Dorsolateral prefrontal cortex (tissue), 120 donors: ENCODE measurements at regions of chr20 and their contacts with region 1.

Region 1: GRCh38 chr20:57329608-57330221 is at the start of gene SPO11:
- DNase-seq: no peak
- H3K4me3 ChIP-seq: peak within 1 kb of the TSS in 1 of 59 donors; percentile 40
- H3K27ac ChIP-seq: peak within 1 kb of the TSS in 3 of 59 donors; percentile 3 to 40 (median 35)
- H3K27me3 ChIP-seq: peaks cover 0 to 40% (median 8%) of the 10 kb centered on the region in 45 donors
- CTCF ChIP-seq: peak in 44 of 56 donors; percentile 10 to 64 (median 32)
- total RNA-seq, gene SPO11: not detected

Region 2: GRCh38 chr20:57259121-57259937 is 70.4 kb before region 1 on chr20:
- intact Hi-C with region 1: loop called (anchors 2 to 10 kb)
- DNase-seq: peak in 2 of 10 donors; percentile 28 to 64
- H3K4me3 ChIP-seq: peak overlapping the region in 46 of 59 donors; percentile 0 to 57 (median 26)
- H3K27ac ChIP-seq: peak overlapping the region in 27 of 59 donors; percentile 1 to 86 (median 33)
- H3K27me3 ChIP-seq: peaks cover 0 to 81% (median 34%) of the 10 kb centered on the region in 45 donors
- CTCF ChIP-seq: no peak

Region 3: DNA sequence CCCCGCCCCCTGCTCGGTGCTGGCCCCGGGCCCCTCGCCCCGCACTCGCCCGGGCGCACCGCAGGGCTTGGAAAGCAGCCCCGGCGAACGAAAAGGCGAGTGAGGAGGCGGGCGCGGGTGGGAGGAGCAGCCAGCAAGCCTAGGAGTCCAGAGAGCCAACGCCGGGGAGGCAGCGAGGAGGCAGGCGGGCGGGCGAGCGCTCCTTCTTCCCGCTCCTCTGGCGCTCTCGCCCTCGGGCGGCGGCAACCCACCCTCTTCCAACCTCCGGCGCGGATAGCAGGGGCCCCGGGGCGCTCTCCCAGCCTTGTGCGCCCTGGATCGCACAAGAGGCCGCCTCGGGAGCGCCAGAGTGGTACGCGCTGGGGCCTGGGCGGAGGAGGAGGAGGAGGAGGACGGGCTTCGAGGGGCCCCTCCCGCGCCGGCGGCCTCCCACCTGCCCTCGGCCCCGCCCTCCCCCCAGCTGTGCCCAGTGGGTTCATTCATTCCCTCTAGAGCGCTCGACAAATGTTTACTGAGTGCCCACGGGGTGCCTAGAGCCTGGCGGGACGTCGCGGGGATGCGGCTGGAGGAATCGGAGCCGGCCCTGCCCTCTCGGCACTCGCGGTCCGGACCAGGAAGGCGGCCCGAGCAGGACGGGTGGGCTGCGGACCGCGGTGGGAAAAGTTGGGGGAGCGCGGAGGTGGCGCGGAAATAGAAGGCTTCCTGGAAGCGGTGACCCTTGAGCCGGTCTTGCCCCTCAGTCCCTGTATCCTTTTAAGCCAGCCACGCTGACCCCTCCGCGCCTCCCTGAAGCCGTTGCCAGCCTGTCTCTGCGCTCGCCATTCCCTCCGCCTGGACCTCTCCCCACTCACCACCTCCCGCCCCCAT is 63.2 kb before region 1 on chr20 and contains the start of gene BMP7:
- intact Hi-C with region 1: loop called in 1 of 2 experiments (anchors 10 kb)
- DNase-seq: peak in 3 of 10 donors; percentile 32 to 59 (median 49)
- H3K4me3 ChIP-seq: peak within 1 kb of the TSS; percentile 31 to 73 (median 58)
- H3K27ac ChIP-seq: peak within 1 kb of the TSS in 47 of 59 donors; percentile 12 to 83 (median 65)
- H3K27me3 ChIP-seq: peaks cover 0 to 76% (median 49%) of the 10 kb centered on the region in 45 donors
- CTCF ChIP-seq: no peak
- total RNA-seq, gene BMP7: 16.7 to 67.3 (median 29.8) TPM